ENCODE measurements at regions of chr5 and their contacts with region 1.

Region 1: DNA sequence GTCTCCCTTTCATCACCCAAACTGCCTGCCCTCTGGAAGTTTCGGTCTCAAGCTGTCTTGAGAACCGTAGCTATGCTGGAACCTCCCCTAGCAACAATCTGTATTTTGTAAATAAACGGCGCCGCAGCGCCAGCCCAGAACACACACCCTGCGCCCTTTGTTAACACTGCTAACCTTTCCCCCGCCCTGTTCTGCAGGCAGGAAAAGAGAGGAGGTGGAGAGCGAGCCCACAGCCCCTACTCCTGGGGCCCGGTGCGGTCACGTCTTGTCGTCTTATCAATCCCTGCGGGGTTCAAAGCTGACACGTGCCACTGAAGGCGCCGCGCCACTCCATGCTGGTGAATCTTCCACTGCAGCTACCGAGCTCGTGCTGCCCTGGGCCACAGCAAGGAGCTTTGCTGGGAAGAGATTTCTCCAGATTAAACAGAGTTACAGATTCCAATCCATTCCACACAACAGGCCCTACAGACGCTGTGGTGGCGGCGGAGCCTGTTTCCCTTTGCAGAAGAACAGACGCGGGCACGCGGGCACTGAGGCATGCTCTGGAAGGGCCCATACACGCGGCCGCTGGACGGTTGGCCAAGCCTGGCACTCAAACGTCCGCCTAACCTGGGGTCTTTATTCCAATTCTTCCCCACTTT is 25.3 kb downstream of the ZDHHC11B start:
- DNase-seq: no peak
- H3K4me3 ChIP-seq: peak overlapping the region in 3 of 4 donors; percentile 14 to 59 (median 17)
- H3K27ac ChIP-seq: peak overlapping the region; percentile 53 to 79 (median 74)
- H3K4me1 ChIP-seq: peaks cover 36 to 59% (median 44%) of the 10 kb centered on the region in 3 donors
- H3K27me3 ChIP-seq: no peaks in the 10 kb centered on the region
- CTCF ChIP-seq: peak in 1 of 6 experiments; percentile 40
- POLR2A ChIP-seq: peak in 1 of 4 donors; percentile 55

Region 2: DNA sequence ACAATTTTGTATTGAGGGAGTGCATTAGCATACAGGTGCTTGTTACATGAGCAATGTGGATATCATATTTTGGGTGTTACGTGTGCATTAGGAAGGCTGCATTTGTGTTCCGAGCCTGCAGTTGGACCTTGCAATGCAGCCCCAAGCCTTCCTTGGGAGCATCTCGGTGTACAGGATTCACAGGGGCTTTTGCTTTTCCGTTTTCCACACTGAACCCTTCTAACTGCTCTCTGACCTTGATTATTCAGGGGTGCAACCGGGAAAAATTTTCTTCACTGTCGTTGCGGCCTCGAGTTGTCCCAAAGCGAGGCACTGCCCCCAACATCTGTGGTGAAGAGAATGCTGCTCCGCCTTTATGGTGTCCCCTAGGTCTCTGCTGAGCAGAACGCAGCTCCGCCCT is 747.3 kb before region 1 on chr5:
- intact Hi-C with region 1: no loop called
- DNase-seq: no peak
- H3K4me3 ChIP-seq: no peak overlapping the region
- H3K27ac ChIP-seq: no peak overlapping the region
- H3K4me1 ChIP-seq: no peaks in the 10 kb centered on the region
- H3K27me3 ChIP-seq: peaks cover 0 to 7% (median 0%) of the 10 kb centered on the region in 4 donors
- CTCF ChIP-seq: no peak
- POLR2A ChIP-seq: no peak

Region 3: GRCh38 chr5:717143-717542 is 42.1 kb before region 1 on chr5:
- intact Hi-C with region 1: no loop called
- DNase-seq: no peak
- H3K4me3 ChIP-seq: no peak overlapping the region
- H3K27ac ChIP-seq: no peak overlapping the region
- H3K4me1 ChIP-seq: peaks cover 0 to 5% (median 0%) of the 10 kb centered on the region in 3 donors
- H3K27me3 ChIP-seq: no peaks in the 10 kb centered on the region
- CTCF ChIP-seq: no peak
- POLR2A ChIP-seq: no peak

Region 4: GRCh38 chr5:849651-850301 is 90.5 kb after region 1 on chr5:
- intact Hi-C with region 1: loop called (anchors 5 kb)
- DNase-seq: no peak
- H3K4me3 ChIP-seq: peak overlapping the region in 2 of 4 donors; percentile 5 to 26
- H3K27ac ChIP-seq: no peak overlapping the region
- H3K4me1 ChIP-seq: peaks cover 10 to 21% (median 14%) of the 10 kb centered on the region in 3 donors
- H3K27me3 ChIP-seq: peaks cover 0 to 45% (median 0%) of the 10 kb centered on the region in 4 donors
- CTCF ChIP-seq: no peak
- POLR2A ChIP-seq: no peak